Ascending aorta (tissue), 2 donors: ENCODE measurements at regions of chr22 and their contacts with region 1.

Region 1: DNA sequence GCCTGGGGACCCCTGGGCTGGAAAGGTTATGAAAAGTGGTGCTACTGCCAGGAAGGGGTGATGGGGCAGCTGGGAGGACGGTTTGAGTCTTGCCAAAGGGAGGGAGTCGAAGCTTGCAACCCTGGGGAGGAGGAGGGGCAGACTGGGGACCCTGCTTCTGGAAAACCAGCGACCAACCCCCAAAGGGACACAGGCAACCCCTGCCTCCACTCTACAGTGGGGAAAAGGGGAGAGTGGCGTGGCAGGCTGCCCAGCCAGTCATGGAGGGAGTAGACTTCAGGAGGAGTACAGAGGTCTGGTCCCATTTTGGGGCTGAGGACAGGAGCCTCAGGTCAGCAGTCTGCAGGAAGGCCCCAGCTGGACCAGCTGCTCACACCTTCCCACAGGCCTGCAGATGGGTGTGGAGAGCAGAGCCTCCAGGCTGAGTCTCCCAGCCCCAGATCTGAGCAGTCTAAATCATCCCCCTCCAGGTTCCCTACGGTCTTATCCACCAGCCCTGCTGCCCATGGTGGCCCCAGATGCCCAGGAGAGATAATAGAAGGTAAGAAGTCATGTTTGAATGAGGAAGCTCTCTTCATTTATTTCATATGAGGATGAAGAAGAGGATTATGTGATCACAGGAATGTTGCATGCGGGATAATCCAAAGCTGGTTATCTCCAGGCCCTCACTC is 3.3 kb downstream of the DDT start:
- DNase-seq: peak in 1 of 2 donors; percentile 43
- H3K4me3 ChIP-seq: no peak overlapping the region
- H3K27ac ChIP-seq: no peak overlapping the region
- H3K4me1 ChIP-seq: no peaks in the 10 kb centered on the region
- H3K27me3 ChIP-seq: no peaks in the 10 kb centered on the region
- CTCF ChIP-seq: no peak

Region 2: DNA sequence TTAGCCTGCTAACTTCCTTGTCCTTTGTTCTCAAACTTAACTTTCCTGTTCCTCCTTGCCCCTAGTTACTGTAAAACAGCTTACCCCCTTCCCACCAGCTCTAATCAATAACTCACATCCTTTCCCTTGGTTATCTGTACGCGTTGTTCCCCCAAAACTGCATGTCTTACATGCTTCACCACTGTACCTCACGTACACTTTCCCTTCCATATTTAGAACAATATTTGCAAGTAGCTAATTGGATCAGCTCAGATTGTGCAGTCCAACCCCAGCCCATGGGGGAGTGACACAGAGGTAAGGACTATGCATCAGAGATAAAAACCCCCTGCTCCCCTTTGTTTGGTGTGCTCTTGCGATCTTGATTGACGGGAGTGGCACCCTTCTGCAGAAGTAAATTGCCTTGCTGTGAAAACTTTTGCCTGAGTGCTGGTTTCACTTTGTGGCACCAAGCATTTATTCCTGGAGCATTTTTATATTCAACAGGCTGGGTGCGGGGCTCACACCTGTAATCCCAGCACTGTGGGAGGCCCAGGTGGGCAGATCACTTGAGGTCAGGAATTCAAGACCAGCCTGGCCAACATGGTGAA is 45.8 kb before region 1 on chr22:
- intact Hi-C with region 1: loop called (anchors 5 kb)
- DNase-seq: no peak
- H3K4me3 ChIP-seq: no peak overlapping the region
- H3K27ac ChIP-seq: no peak overlapping the region
- H3K4me1 ChIP-seq: no peaks in the 10 kb centered on the region
- H3K27me3 ChIP-seq: no peaks in the 10 kb centered on the region
- CTCF ChIP-seq: no peak